SK-N-SH (cell line): ENCODE measurements at regions of chr6 and their contacts with region 1.

Region 1: GRCh38 chr6:11606287-11606686 is 68.7 kb downstream of the TMEM170B start:
- DNase-seq: no peak
- H3K4me3 ChIP-seq: no peak overlapping the region
- H3K27ac ChIP-seq: no peak overlapping the region
- H3K4me1 ChIP-seq: peaks cover 0 to 5% of the 10 kb centered on the region in 2 experiments; a peak in 3 of 4 replicates
- H3K27me3 ChIP-seq: no peaks in the 10 kb centered on the region
- CTCF ChIP-seq: no peak
- EP300 ChIP-seq: no peak
- RAD21 ChIP-seq: no peak

Region 2: DNA sequence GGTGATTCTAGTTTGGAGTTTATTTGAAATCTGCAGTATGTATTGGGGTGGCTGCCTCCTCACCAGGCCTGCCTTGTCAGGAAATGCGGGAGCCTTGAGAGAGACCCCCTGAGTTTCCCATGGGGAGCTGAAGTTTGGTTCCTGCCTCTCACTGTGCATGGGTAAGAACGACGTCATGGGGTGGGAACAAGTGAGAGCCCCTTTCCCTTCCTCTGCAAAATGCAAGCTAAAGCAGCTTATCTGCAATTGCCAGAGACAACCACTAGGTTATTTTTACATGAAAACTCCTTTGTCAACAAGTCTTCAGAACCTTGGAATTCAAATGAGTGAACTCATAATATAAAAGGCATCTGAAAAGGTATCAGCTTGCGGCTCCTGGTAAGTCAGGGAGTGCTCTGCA is 10.4 kb before region 1 on chr6:
- CTCF ChIA-PET with region 1: interaction called, 11 read pairs
- POLR2A ChIA-PET with region 1: no interaction called
- DNase-seq: peak; percentile 20
- H3K4me3 ChIP-seq: no peak overlapping the region
- H3K27ac ChIP-seq: no peak overlapping the region
- H3K4me1 ChIP-seq: no peaks in the 10 kb centered on the region
- H3K27me3 ChIP-seq: no peaks in the 10 kb centered on the region
- CTCF ChIP-seq: peak; percentile 50
- EP300 ChIP-seq: no peak
- RAD21 ChIP-seq: no peak